CD4-positive, alpha-beta T cell (primary cell): ENCODE measurements at regions of chr22 and their contacts with region 1.

Region 1: GRCh38 chr22:31290494-31291471 is 1.5 kb downstream of the PIK3IP1 start:
- DNase-seq: peak; percentile 93 to 98 (median 96)
- ATAC-seq: peak; percentile 66
- H3K4me3 ChIP-seq: peak overlapping the region; percentile 90
- H3K4me3 Mint-ChIP-seq: peak overlapping the region; percentile 94
- H3K27ac ChIP-seq: peak overlapping the region; percentile 98 to 100
- H3K27ac Mint-ChIP-seq: peak overlapping the region; percentile 98
- H3K4me1 ChIP-seq: peaks cover 69% of the 10 kb centered on the region
- H3K4me1 Mint-ChIP-seq: peaks cover 82% of the 10 kb centered on the region
- H3K27me3 ChIP-seq: no peaks in the 10 kb centered on the region
- H3K27me3 Mint-ChIP-seq: no peaks in the 10 kb centered on the region
- CTCF ChIP-seq: no peak

Region 2: DNA sequence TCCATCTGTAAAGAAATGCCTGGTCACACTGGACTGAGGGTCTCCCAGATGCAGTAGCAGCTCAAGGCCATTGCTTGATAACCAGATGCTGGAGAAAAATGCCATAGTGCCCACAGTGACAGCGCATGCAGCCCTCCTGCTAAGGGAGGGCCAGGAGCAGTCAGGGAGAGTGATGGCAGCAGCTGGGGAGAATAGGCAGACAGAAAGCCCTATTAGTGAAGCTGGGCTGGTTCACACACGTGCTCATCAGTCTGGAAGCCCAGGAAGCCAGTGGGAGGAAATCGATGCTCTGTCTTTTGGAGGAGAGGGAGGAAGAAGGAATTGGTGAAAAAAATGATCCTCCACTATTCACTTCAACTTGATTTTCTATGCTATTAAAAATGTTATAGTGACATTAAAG is 513.2 kb before region 1 on chr22:
- CTCF ChIA-PET with region 1: no interaction called
- POLR2A ChIA-PET with region 1: no interaction called
- intact Hi-C with region 1: no loop called
- DNase-seq: no peak
- ATAC-seq: no peak
- H3K4me3 ChIP-seq: no peak overlapping the region
- H3K4me3 Mint-ChIP-seq: no peak overlapping the region
- H3K27ac ChIP-seq: no peak overlapping the region
- H3K27ac Mint-ChIP-seq: no peak overlapping the region
- H3K4me1 ChIP-seq: no peaks in the 10 kb centered on the region
- H3K4me1 Mint-ChIP-seq: no peaks in the 10 kb centered on the region
- H3K27me3 ChIP-seq: no peaks in the 10 kb centered on the region
- H3K27me3 Mint-ChIP-seq: no peaks in the 10 kb centered on the region
- CTCF ChIP-seq: no peak

Region 3: DNA sequence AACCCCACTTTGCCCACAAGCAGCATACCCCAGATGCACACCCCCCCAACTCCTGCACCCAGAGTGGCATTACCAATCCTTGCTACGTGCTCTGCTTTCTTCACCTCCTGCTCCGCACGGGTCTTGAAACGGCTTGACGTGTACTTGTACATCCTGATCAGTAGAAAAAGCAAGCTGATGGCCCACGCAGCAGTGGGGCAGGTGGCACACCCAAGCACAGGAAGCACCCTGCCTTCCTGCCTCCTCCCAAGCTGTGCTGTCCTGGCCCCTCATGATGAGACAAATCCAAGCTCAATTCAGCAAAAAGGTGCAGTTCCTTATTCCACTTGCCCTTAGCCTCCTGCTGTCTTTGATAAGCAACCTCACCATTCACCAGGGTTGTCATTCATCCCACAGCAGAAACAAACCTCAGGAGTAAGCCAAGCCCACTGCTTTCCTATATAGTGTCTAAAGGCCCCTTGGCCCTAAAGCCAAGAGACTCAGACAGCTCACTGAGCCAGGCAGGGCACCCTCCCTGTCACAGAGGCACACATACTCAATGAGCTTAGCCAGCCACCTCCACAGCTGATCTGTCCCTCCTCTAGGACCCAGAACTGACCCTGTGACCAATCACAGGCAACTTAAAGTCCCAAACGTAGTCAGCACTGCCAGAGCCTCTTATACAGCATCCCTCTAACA is 350.0 kb before region 1 on chr22:
- CTCF ChIA-PET with region 1: no interaction called
- POLR2A ChIA-PET with region 1: interaction called, 12 read pairs
- intact Hi-C with region 1: no loop called
- DNase-seq: peak; percentile 25 to 83 (median 55)
- ATAC-seq: peak; percentile 77
- H3K4me3 ChIP-seq: peak overlapping the region; percentile 65
- H3K4me3 Mint-ChIP-seq: peak overlapping the region; percentile 86
- H3K27ac ChIP-seq: peak overlapping the region; percentile 59 to 70
- H3K27ac Mint-ChIP-seq: peak overlapping the region; percentile 92
- H3K4me1 ChIP-seq: peaks cover 83% of the 10 kb centered on the region
- H3K4me1 Mint-ChIP-seq: peaks cover 85% of the 10 kb centered on the region
- H3K27me3 ChIP-seq: no peaks in the 10 kb centered on the region
- H3K27me3 Mint-ChIP-seq: no peaks in the 10 kb centered on the region
- CTCF ChIP-seq: no peak

Region 4: GRCh38 chr22:31211862-31212730 is 78.7 kb before region 1 on chr22 and contains the start of gene LIMK2:
- CTCF ChIA-PET with region 1: interaction called, 4 read pairs
- POLR2A ChIA-PET with region 1: interaction called, 49 read pairs
- intact Hi-C with region 1: loop called in 1 of 2 experiments (anchors 1 kb)
- DNase-seq: peak; percentile 92 to 99 (median 97)
- ATAC-seq: peak; percentile 99
- H3K4me3 ChIP-seq: peak within 1 kb of the TSS; percentile 100
- H3K4me3 Mint-ChIP-seq: peak within 1 kb of the TSS; percentile 94
- H3K27ac ChIP-seq: peak within 1 kb of the TSS; percentile 55 to 72
- H3K27ac Mint-ChIP-seq: peak within 1 kb of the TSS; percentile 75
- H3K4me1 ChIP-seq: peaks cover 45% of the 10 kb centered on the region
- H3K4me1 Mint-ChIP-seq: peaks cover 62% of the 10 kb centered on the region
- H3K27me3 ChIP-seq: no peaks in the 10 kb centered on the region
- H3K27me3 Mint-ChIP-seq: no peaks in the 10 kb centered on the region
- CTCF ChIP-seq: peak; percentile 82
- total RNA-seq, gene LIMK2: 13.1 to 14.6 TPM

Region 5: GRCh38 chr22:31272522-31273446 is 18.0 kb before region 1 on chr22:
- CTCF ChIA-PET with region 1: interaction called, 27 read pairs
- POLR2A ChIA-PET with region 1: interaction called, 1,064 read pairs
- intact Hi-C with region 1: loop called in 1 of 2 experiments (anchors 2 kb)
- DNase-seq: peak in 9 of 14 experiments; percentile 38 to 79 (median 57)
- ATAC-seq: peak; percentile 70
- H3K4me3 ChIP-seq: no peak overlapping the region
- H3K4me3 Mint-ChIP-seq: peak overlapping the region; percentile 45
- H3K27ac ChIP-seq: peak overlapping the region in 1 of 2 donors; percentile 3
- H3K27ac Mint-ChIP-seq: peak overlapping the region; percentile 88
- H3K4me1 ChIP-seq: peaks cover 62% of the 10 kb centered on the region
- H3K4me1 Mint-ChIP-seq: peaks cover 74% of the 10 kb centered on the region
- H3K27me3 ChIP-seq: no peaks in the 10 kb centered on the region
- H3K27me3 Mint-ChIP-seq: no peaks in the 10 kb centered on the region
- CTCF ChIP-seq: peak; percentile 78

Region 6: GRCh38 chr22:31302006-31302405 is 11.2 kb after region 1 on chr22:
- CTCF ChIA-PET with region 1: no interaction called
- POLR2A ChIA-PET with region 1: interaction called, 1,064 read pairs
- intact Hi-C with region 1: no loop called
- DNase-seq: no peak
- ATAC-seq: no peak
- H3K4me3 ChIP-seq: no peak overlapping the region
- H3K4me3 Mint-ChIP-seq: no peak overlapping the region
- H3K27ac ChIP-seq: no peak overlapping the region
- H3K27ac Mint-ChIP-seq: no peak overlapping the region
- H3K4me1 ChIP-seq: peaks cover 22% of the 10 kb centered on the region
- H3K4me1 Mint-ChIP-seq: peaks cover 66% of the 10 kb centered on the region
- H3K27me3 ChIP-seq: no peaks in the 10 kb centered on the region
- H3K27me3 Mint-ChIP-seq: no peaks in the 10 kb centered on the region
- CTCF ChIP-seq: no peak

Region 7: DNA sequence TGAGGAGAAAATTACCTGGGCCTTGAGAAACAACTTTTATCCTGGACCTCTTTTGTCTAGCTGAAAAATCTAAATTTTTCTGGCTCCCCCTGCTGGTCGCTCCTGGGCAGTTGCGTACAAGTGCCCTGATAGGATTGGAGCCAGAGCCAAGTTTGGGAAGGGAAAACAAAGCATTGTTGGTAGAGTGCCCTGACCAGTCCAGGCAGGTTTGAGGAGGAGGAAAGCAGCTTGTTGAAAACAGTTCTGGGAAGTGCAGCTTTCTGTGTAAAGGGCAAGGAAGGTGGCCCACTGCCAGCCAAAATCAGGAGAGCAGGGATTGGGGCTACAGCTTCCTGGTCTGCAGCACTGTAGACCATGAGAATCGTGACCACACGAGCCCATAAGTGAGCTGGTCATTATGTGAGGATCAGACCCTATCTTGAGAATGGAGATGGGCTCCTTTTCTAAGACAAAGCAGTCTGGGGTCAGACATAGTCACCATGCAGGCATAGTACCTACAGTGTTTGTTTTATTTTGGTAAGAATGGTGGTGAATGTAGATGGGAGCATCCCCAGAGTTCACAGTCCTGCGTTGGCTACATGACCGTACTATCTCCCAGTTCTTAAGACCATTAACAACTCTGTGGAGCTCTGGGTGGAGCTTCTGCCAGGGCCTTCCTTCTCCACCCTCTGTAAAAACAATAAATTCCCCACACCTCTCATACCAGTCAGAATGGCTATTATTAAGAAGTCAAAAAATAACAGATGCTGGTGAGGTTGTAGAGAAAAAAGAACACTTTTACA is 22.8 kb after region 1 on chr22:
- CTCF ChIA-PET with region 1: interaction called, 73 read pairs
- POLR2A ChIA-PET with region 1: interaction called, 113 read pairs
- intact Hi-C with region 1: loop called (anchors 1 kb)
- DNase-seq: peak; percentile 41 to 86 (median 64)
- ATAC-seq: peak; percentile 79
- H3K4me3 ChIP-seq: no peak overlapping the region
- H3K4me3 Mint-ChIP-seq: no peak overlapping the region
- H3K27ac ChIP-seq: no peak overlapping the region
- H3K27ac Mint-ChIP-seq: no peak overlapping the region
- H3K4me1 ChIP-seq: peaks cover 15% of the 10 kb centered on the region
- H3K4me1 Mint-ChIP-seq: peaks cover 29% of the 10 kb centered on the region
- H3K27me3 ChIP-seq: no peaks in the 10 kb centered on the region
- H3K27me3 Mint-ChIP-seq: no peaks in the 10 kb centered on the region
- CTCF ChIP-seq: peak; percentile 90

Region 8: GRCh38 chr22:31345331-31346254 is 54.8 kb after region 1 on chr22:
- CTCF ChIA-PET with region 1: interaction called, 6 read pairs
- POLR2A ChIA-PET with region 1: interaction called, 181 read pairs
- intact Hi-C with region 1: loop called (anchors 1 to 2 kb)
- DNase-seq: peak; percentile 84 to 97 (median 90)
- ATAC-seq: peak; percentile 69
- H3K4me3 ChIP-seq: peak overlapping the region; percentile 88
- H3K4me3 Mint-ChIP-seq: peak overlapping the region; percentile 97
- H3K27ac ChIP-seq: peak overlapping the region in 1 of 2 donors; percentile 69
- H3K27ac Mint-ChIP-seq: peak overlapping the region; percentile 95
- H3K4me1 ChIP-seq: peaks cover 65% of the 10 kb centered on the region
- H3K4me1 Mint-ChIP-seq: peaks cover 54% of the 10 kb centered on the region
- H3K27me3 ChIP-seq: no peaks in the 10 kb centered on the region
- H3K27me3 Mint-ChIP-seq: no peaks in the 10 kb centered on the region
- CTCF ChIP-seq: peak; percentile 73